PC-3 (cell line): ENCODE measurements at regions of chr22 and their contacts with region 1.

Region 1: GRCh38 chr22:42752230-42752746 is 31.6 kb upstream of the A4GALT start:
- DNase-seq: no peak
- ATAC-seq: no peak
- H3K4me3 ChIP-seq: no peak overlapping the region
- H3K27ac ChIP-seq: no peak overlapping the region
- H3K4me1 ChIP-seq: no peaks in the 10 kb centered on the region; the same call in 1 of the 2 replicates
- H3K27me3 ChIP-seq: no peaks in the 10 kb centered on the region
- CTCF ChIP-seq: no peak

Region 2: DNA sequence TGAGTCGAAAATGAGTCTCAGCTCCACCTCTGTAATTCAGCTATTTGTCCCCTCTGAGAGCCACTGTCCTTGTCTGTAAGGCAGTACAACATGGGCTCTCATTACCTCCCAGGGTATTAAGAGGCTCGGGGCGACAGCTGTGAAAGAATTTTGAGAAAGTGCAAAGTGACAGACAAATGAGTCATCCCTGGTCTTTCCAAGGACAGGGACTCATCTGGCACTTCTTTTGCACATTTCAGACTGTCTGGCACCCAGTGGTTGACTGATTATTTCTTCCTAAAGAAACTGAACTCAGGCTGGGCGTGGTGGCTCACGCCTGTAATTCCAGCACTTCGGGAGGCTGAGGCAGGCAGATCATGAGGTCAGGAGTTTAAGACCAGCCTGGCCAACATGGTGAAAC is 166.9 kb after region 1 on chr22:
- CTCF ChIA-PET with region 1: no interaction called
- POLR2A ChIA-PET with region 1: interaction called, 12 read pairs
- intact Hi-C with region 1: no loop called
- DNase-seq: peak; percentile 44
- ATAC-seq: peak; percentile 33
- H3K4me3 ChIP-seq: no peak overlapping the region
- H3K27ac ChIP-seq: no peak overlapping the region
- H3K4me1 ChIP-seq: peaks cover 27% of the 10 kb centered on the region
- H3K27me3 ChIP-seq: no peaks in the 10 kb centered on the region
- CTCF ChIP-seq: no peak